Naive thymus-derived CD4-positive, alpha-beta T cell (primary cell): ENCODE measurements at regions of chr12 and their contacts with region 1.

Region 1: GRCh38 chr12:15882118-15882971 is at the start of gene STRAP:
- DNase-seq: peak; percentile 94 to 98 (median 97)
- ATAC-seq: peak; percentile 97
- H3K4me3 ChIP-seq: peak within 1 kb of the TSS; percentile 97
- H3K4me3 Mint-ChIP-seq: peak within 1 kb of the TSS; percentile 91 to 100 (median 97)
- H3K27ac ChIP-seq: peak within 1 kb of the TSS; percentile 96
- H3K27ac Mint-ChIP-seq: peak within 1 kb of the TSS; percentile 98 to 100 (median 99)
- H3K4me1 ChIP-seq: peaks cover 22 to 32% of the 10 kb centered on the region in 2 donors
- H3K4me1 Mint-ChIP-seq: peaks cover 35 to 66% (median 60%) of the 10 kb centered on the region in 7 donors
- H3K27me3 ChIP-seq: no peaks in the 10 kb centered on the region
- H3K27me3 Mint-ChIP-seq: no peaks in the 10 kb centered on the region
- total RNA-seq, gene STRAP: 42.2 to 97.2 (median 70.9) TPM

Region 2: GRCh38 chr12:14257734-14258574 is 1624.4 kb before region 1 on chr12:
- CTCF ChIA-PET with region 1: no interaction called
- POLR2A ChIA-PET with region 1: no interaction called
- intact Hi-C with region 1: loop called in 1 of 2 experiments (anchors 5 kb)
- DNase-seq: peak; percentile 49 to 85 (median 79)
- ATAC-seq: peak; percentile 72
- H3K4me3 ChIP-seq: peak overlapping the region; percentile 31
- H3K4me3 Mint-ChIP-seq: peak overlapping the region; percentile 67 to 81 (median 77)
- H3K27ac ChIP-seq: peak overlapping the region; percentile 65
- H3K27ac Mint-ChIP-seq: peak overlapping the region; percentile 89 to 99 (median 98)
- H3K4me1 ChIP-seq: peaks cover 37 to 38% of the 10 kb centered on the region in 2 donors
- H3K4me1 Mint-ChIP-seq: peaks cover 39 to 66% (median 61%) of the 10 kb centered on the region in 7 donors
- H3K27me3 ChIP-seq: no peaks in the 10 kb centered on the region
- H3K27me3 Mint-ChIP-seq: no peaks in the 10 kb centered on the region

Region 3: GRCh38 chr12:14803011-14803829 is 1079.1 kb before region 1 on chr12 and contains the starts of genes C12orf60 and WBP11:
- CTCF ChIA-PET with region 1: no interaction called
- POLR2A ChIA-PET with region 1: no interaction called
- intact Hi-C with region 1: loop called (anchors 1 to 5 kb)
- DNase-seq: peak; percentile 56 to 95 (median 91)
- ATAC-seq: peak; percentile 98
- H3K4me3 ChIP-seq: peak within 1 kb of the TSS; percentile 80
- H3K4me3 Mint-ChIP-seq: no peak within 1 kb of the TSS
- H3K27ac ChIP-seq: peak within 1 kb of the TSS; percentile 97
- H3K27ac Mint-ChIP-seq: no peak within 1 kb of the TSS
- H3K4me1 ChIP-seq: peaks cover 14 to 19% of the 10 kb centered on the region in 2 donors
- H3K4me1 Mint-ChIP-seq: peaks cover 0 to 26% (median 10%) of the 10 kb centered on the region in 7 donors
- H3K27me3 ChIP-seq: no peaks in the 10 kb centered on the region
- H3K27me3 Mint-ChIP-seq: no peaks in the 10 kb centered on the region
- total RNA-seq, gene C12orf60: 0.22 to 1.7 (median 1.2) TPM in 4 of 5 experiments, not detected in the other
- total RNA-seq, gene WBP11: 77.9 to 129 (median 90.4) TPM

Region 4: DNA sequence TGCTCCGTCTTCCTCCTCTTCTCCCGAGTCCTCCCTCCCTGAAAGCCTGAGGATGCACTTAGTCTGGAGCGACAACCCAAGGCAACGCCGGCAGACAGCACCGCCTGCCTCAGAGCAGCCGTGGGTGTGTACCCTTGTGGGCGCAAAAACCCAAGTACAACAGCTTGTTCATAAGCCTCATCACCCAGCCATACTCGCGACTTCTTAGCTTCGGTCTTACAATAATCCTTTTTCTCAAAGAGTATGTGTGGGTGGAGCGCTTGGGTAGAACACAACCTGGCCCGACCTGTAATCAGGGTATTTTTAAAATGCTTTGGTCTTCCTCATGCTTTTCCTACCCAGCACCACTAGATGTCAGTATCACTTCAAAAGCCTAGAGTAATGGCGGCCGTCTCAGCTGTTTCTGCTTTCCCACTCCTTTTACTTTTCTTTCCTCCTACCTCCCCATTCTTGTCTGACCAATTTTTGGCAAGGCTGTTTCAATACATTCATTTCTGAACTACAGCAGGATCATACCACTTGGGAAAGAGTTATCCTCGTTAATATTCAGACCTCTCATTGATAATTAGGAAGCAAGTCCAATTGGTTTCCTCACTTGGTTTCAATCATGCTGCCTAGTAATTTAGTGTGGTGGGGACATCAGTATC is 292.0 kb before region 1 on chr12:
- CTCF ChIA-PET with region 1: interaction called, 4 read pairs
- POLR2A ChIA-PET with region 1: no interaction called
- intact Hi-C with region 1: loop called in 1 of 2 experiments (anchors 1 kb)
- DNase-seq: peak; percentile 12 to 74 (median 66)
- ATAC-seq: peak; percentile 98
- H3K4me3 ChIP-seq: peak overlapping the region; percentile 40
- H3K4me3 Mint-ChIP-seq: peak overlapping the region; percentile 63 to 88 (median 78)
- H3K27ac ChIP-seq: no peak overlapping the region
- H3K27ac Mint-ChIP-seq: peak overlapping the region in 8 of 9 donors; percentile 61 to 86 (median 69)
- H3K4me1 ChIP-seq: peaks cover 0 to 5% of the 10 kb centered on the region in 2 donors
- H3K4me1 Mint-ChIP-seq: peaks cover 0 to 12% (median 8%) of the 10 kb centered on the region in 7 donors
- H3K27me3 ChIP-seq: no peaks in the 10 kb centered on the region
- H3K27me3 Mint-ChIP-seq: peaks cover 0 to 4% (median 0%) of the 10 kb centered on the region in 5 donors

Region 5: GRCh38 chr12:15789220-15790171 is 92.8 kb before region 1 on chr12 and contains the start of gene EPS8:
- CTCF ChIA-PET with region 1: no interaction called
- POLR2A ChIA-PET with region 1: interaction called, 7 read pairs
- intact Hi-C with region 1: loop called (anchors 1 kb)
- DNase-seq: peak; percentile 82 to 92 (median 91)
- ATAC-seq: peak; percentile 95
- H3K4me3 ChIP-seq: peak within 1 kb of the TSS; percentile 78
- H3K4me3 Mint-ChIP-seq: peak within 1 kb of the TSS; percentile 91 to 99 (median 96)
- H3K27ac ChIP-seq: peak within 1 kb of the TSS; percentile 63
- H3K27ac Mint-ChIP-seq: peak within 1 kb of the TSS; percentile 58 to 97 (median 84)
- H3K4me1 ChIP-seq: peaks cover 0 to 7% of the 10 kb centered on the region in 2 donors
- H3K4me1 Mint-ChIP-seq: peaks cover 10 to 17% (median 15%) of the 10 kb centered on the region in 7 donors
- H3K27me3 ChIP-seq: peaks cover 0 to 11% of the 10 kb centered on the region in 2 donors
- H3K27me3 Mint-ChIP-seq: peaks cover 26 to 74% (median 49%) of the 10 kb centered on the region in 5 donors
- total RNA-seq, gene EPS8: 2.0 to 3.1 (median 2.7) TPM

Region 6: DNA sequence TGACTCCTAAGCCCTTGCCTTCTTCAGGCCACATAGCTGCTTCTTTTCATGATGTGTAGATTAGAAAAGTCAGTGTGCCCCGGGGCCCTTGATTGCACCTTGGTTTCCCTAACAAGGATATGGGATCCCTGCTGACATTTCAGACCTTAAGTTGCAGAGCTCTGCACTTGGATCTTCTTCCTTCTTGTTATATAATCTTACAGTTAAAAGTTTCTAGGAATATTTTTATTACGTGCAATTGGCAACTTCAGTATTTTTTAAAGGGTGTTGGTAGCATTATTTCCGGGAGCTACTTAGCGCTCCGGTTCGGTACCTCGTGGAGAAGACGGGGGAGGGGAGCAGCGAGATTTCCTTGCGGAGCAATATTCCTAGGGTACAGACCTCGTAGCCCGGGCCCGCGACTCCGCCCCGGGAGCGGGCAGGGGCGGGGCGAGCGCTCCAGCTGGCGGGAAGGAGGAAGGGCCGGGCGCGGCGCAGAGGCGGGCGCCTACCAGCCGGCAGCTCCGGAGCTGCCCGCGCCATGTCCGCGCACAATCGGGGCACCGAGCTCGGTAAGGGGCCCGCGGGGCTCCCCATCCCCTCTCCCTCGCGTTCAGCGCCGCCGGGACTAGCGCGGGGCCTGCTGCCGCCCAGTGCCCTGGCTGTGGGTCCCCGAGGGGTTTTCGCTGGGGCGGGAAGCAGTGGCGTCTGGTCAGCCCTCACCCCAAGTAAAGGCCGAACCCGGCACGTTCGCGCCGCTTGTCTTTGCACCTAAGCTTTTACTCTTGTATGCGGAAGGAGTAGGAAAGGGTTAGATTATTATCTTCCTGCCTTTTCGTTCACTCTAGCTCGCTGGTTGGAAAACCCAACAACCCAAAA is 28.7 kb after region 1 on chr12 and contains the start of gene DERA:
- CTCF ChIA-PET with region 1: interaction called, 3 read pairs
- POLR2A ChIA-PET with region 1: interaction called, 12 read pairs
- intact Hi-C with region 1: loop called (anchors 1 kb)
- DNase-seq: peak; percentile 38 to 69 (median 57)
- ATAC-seq: peak; percentile 94
- H3K4me3 ChIP-seq: peak within 1 kb of the TSS; percentile 90
- H3K4me3 Mint-ChIP-seq: peak within 1 kb of the TSS; percentile 87 to 97 (median 93)
- H3K27ac ChIP-seq: peak within 1 kb of the TSS; percentile 78
- H3K27ac Mint-ChIP-seq: peak within 1 kb of the TSS; percentile 82 to 95 (median 87)
- H3K4me1 ChIP-seq: peaks cover 0 to 4% of the 10 kb centered on the region in 2 donors
- H3K4me1 Mint-ChIP-seq: peaks cover 4 to 34% (median 21%) of the 10 kb centered on the region in 7 donors
- H3K27me3 ChIP-seq: no peaks in the 10 kb centered on the region
- H3K27me3 Mint-ChIP-seq: no peaks in the 10 kb centered on the region
- total RNA-seq, gene DERA: 8.4 to 15.9 (median 12.2) TPM